AG04449 (cell line): ENCODE measurements at regions of chr7 and their contacts with region 1.

Region 1: DNA sequence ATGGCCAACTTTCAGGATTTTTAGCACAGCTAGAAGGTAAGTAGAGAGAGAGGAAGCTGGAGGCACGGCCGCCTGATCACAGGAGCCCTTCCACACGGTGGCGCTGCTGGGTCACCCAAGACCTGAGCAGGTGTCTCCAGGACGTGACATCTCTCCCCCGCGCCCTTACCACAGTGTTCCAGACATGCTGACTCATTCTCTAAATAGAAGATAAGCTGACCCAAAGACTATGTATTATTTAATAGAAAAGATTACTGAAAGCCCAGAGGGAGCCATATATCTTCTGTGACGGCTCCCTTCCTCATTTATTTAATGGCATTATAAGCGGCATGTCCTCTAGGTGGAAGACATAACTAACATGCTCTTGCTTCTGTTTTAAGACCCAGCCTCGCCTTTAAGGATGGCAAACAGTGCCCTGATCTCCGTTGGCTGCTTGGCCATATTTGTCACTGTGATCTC is 26.0 kb upstream of the MALSU1 start:
- DNase-seq: peak; percentile 42
- H3K4me3 ChIP-seq: no peak overlapping the region
- CTCF ChIP-seq: peak; percentile 91

Region 2: GRCh38 chr7:23181684-23182553 is 91.3 kb before region 1 on chr7 and contains the start of gene NUP42:
- CTCF ChIA-PET with region 1: interaction called, 24 read pairs
- POLR2A ChIA-PET with region 1: no interaction called
- DNase-seq: peak; percentile 96
- H3K4me3 ChIP-seq: peak within 1 kb of the TSS; percentile 97
- CTCF ChIP-seq: no peak

Region 3: DNA sequence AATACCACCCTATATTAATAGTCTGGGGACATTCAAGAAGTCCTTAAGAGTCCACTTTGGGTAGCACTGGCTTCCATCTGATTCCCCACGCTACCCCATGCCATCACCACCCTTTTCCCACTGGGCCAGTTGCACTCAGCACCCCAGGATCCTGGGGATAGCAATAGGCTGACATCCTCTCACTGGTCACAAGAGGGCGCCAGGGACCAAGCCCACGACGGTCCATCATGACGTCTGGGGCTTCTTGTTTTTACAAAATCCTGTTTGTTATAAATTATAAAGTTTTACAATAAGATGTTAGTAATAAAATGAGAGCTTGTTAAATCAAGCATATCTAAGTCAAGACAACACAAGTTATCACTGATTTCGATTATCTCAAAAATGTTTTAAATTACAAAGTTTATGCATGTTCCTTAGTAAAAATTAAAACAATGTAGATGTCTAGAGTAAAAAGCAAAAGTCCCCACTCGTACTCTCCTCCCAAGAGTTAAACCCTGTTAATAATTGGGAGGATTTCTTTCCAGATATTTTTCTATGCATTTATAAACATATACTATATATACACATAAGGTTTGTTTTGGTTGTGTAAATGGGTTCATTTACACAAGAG is 11.2 kb before region 1 on chr7:
- CTCF ChIA-PET with region 1: interaction called, 310 read pairs
- POLR2A ChIA-PET with region 1: no interaction called
- DNase-seq: no peak
- H3K4me3 ChIP-seq: no peak overlapping the region
- CTCF ChIP-seq: peak; percentile 89

Region 4: GRCh38 chr7:23298885-23299769 is 26.0 kb after region 1 on chr7 and contains the start of gene MALSU1:
- CTCF ChIA-PET with region 1: interaction called, 34 read pairs
- POLR2A ChIA-PET with region 1: interaction called, 4 read pairs
- DNase-seq: peak; percentile 65
- H3K4me3 ChIP-seq: peak within 1 kb of the TSS; percentile 91
- CTCF ChIP-seq: no peak

Region 5: DNA sequence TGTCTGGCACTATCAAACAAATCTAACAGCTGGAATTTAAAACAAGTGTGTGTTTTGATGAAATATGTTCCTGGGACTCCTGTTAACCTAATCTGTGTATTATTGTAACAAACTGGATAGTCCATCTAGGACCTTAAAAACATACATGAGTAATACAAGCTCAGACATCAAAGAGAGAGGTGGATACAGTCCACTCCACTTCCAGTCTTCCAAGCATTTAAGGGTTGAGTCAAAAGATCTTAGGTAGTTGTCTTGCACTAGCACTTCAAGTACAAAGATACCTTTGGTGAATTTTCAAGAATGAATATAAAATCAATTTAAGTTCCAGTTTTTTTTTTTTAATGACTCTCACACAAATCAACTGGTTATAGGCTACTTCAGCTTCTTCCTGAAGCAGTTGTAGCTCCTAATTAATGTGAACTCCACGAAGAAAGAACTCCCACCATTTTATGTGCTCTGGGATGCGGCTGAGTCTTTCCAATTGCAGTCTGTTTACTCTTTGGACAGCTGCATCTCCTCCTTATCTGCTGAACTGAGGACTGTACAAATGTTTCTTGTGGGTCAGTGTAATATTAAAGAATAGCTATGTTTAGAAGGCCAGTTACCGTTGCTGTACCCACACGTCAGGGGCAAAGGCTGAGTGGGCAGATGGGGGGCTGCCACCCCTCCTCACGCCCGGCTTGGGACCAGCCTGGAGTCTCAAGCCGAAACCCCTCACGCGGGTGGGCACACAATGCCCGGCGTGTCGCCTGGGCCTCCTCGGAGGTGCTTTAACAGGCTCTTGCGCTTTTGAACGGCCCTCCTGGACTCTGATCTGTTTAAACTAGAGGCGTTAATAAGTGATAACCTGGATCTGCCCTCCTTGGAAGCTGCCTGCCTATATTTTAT is 200.0 kb after region 1 on chr7:
- CTCF ChIA-PET with region 1: interaction called, 10 read pairs
- POLR2A ChIA-PET with region 1: no interaction called
- DNase-seq: no peak
- H3K4me3 ChIP-seq: peak overlapping the region; percentile 87
- CTCF ChIP-seq: no peak

Region 6: DNA sequence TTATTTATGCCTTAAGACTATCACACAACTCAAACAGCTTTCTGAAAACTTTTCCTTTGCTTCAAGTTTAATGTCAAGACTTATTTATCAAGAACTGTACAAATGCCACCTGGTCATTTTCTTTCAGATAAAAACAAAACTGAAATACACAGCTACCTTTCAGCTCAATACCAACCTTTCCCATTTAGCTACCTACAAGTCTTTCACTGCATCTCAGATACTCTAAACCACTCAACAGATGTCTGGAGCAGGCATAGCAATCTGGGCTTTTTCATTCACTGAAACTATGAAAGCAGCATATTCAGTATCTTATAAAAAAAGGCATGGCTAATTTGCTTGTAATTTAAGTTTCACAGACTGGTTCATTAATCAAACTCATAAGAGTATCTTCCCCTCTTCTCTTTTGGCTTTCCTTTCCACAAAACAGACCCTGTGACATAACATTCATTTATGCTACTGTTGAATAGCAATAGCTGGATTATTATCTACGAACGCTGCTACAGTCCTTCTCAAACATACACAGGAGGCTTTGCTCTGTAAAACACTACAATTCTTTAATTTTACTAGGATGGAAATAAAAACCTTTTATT is 250.4 kb after region 1 on chr7:
- CTCF ChIA-PET with region 1: interaction called, 16 read pairs
- POLR2A ChIA-PET with region 1: no interaction called
- DNase-seq: no peak
- H3K4me3 ChIP-seq: no peak overlapping the region
- CTCF ChIP-seq: no peak

Region 7: GRCh38 chr7:23546897-23547572 is 273.9 kb after region 1 on chr7:
- CTCF ChIA-PET with region 1: interaction called, 46 read pairs
- POLR2A ChIA-PET with region 1: no interaction called
- DNase-seq: peak; percentile 62
- H3K4me3 ChIP-seq: no peak overlapping the region
- CTCF ChIP-seq: peak; percentile 81